Heart left ventricle (tissue), 16 donors: ENCODE measurements at regions of chr9 and their contacts with region 1.

Region 1: GRCh38 chr9:706606-707459 is 134.7 kb upstream of the DMRT1 start:
- DNase-seq: peak; percentile 60 to 84 (median 70)
- ATAC-seq: peak; percentile 23 to 70 (median 66)
- H3K4me3 ChIP-seq: peak overlapping the region; percentile 20 to 68 (median 58)
- H3K27ac ChIP-seq: peak overlapping the region; percentile 42 to 85 (median 64)
- H3K4me1 ChIP-seq: peaks cover 4 to 57% (median 33%) of the 10 kb centered on the region in 12 donors
- H3K27me3 ChIP-seq: peaks cover 0 to 4% (median 0%) of the 10 kb centered on the region in 9 donors
- CTCF ChIP-seq: no peak
- POLR2A ChIP-seq: no peak

Region 2: DNA sequence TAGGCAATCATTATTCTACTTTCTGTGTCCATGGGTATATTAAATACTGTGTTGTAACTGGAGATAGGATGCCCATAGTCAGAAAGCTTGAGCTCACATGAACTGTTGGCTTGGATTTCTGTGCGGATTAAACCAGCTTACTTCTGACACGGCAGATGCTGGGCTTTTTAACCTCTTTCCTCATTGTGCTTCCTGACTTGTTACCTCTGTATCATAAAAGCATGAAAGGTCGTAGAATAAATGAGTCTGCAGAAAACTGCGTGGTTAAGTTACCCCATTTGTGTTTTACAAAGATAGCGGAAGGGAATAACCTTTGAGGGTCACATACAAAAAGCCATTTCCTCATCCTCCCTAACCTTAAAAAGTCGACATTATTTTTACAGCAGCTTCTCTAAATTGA is 64.8 kb before region 1 on chr9:
- intact Hi-C with region 1: no loop called
- DNase-seq: no peak
- ATAC-seq: no peak
- H3K4me3 ChIP-seq: no peak overlapping the region
- H3K27ac ChIP-seq: peak overlapping the region; percentile 31 to 84 (median 62)
- H3K4me1 ChIP-seq: peaks cover 0 to 34% (median 12%) of the 10 kb centered on the region in 12 donors
- H3K27me3 ChIP-seq: no peaks in the 10 kb centered on the region
- CTCF ChIP-seq: no peak
- POLR2A ChIP-seq: no peak

Region 3: GRCh38 chr9:738209-738915 is 31.5 kb after region 1 on chr9:
- intact Hi-C with region 1: loop called in 2 of 10 experiments (anchors 2 to 5 kb)
- DNase-seq: peak; percentile 70 to 81 (median 79)
- ATAC-seq: peak; percentile 75 to 92 (median 87)
- H3K4me3 ChIP-seq: no peak overlapping the region
- H3K27ac ChIP-seq: peak overlapping the region; percentile 69 to 95 (median 88)
- H3K4me1 ChIP-seq: peaks cover 8 to 82% (median 43%) of the 10 kb centered on the region in 12 donors
- H3K27me3 ChIP-seq: no peaks in the 10 kb centered on the region
- CTCF ChIP-seq: no peak
- POLR2A ChIP-seq: peak in 1 of 2 donors; percentile 14

Region 4: DNA sequence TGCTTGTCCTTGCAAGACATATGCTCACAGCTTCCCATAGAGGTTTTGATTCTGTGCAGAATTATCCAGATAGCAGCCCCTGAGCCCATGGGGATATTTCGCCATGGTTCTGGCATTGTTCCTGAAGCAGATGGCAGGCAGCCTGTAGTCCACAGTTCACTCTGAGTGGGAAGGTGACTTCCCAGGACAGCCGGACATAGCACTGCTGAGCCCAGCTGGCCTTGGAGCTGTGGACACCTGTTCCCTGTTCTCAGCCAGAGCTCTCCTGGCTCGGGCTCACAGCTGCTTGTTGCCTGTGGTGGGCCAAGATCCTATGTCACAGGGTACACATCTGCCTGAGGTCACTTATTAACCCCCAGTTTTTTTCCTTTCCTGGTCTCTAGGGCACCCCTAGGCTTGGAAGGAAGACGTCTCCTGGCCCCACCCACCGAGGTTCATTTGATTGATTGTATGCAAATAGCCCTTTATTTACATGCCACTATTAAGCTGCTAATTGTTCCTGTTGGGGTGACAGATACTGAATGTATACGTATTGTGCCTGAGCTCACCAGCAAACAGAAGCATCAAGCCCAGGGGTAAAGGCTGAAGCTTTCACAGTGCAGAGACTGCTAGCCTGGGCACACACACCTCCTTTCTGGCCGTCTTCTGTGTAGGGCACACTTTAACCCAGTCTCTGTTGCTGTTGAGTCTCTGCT is 38.1 kb after region 1 on chr9:
- intact Hi-C with region 1: loop called in 2 of 10 experiments (anchors 2 to 5 kb)
- DNase-seq: peak; percentile 83 to 91 (median 86)
- ATAC-seq: peak; percentile 94 to 97 (median 96)
- H3K4me3 ChIP-seq: no peak overlapping the region
- H3K27ac ChIP-seq: peak overlapping the region; percentile 20 to 81 (median 72)
- H3K4me1 ChIP-seq: peaks cover 0 to 50% (median 25%) of the 10 kb centered on the region in 12 donors
- H3K27me3 ChIP-seq: no peaks in the 10 kb centered on the region
- CTCF ChIP-seq: no peak
- POLR2A ChIP-seq: no peak

Region 5: DNA sequence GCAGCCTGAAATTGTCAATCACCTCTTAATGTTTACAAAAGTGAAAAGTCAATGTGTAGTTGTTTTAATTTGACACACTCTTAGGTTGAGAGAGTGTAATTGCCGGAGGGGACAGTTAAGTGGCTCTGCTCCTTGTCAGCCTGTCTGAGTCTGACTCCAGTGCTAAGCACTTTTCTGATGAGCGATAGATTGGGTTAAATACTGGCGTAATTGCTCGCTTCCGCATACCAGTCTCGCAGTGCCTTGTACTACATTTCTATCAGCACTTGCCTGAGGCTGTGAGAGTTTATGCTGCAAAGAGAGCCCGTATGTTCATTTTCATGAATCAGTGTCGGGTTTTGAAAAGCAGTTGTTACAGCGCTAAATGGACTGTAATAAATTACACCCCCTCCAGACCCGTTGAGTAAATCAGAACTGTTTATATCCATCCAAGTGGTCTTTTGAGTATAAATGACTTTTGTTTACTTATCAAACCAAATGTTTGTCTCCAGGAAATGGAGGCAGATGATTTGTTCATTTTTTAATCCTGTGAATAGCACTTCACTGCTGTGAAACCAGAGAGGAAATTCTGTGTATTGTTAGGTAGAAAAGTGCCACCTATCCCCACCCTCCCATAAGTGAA is 228.6 kb after region 1 on chr9:
- intact Hi-C with region 1: no loop called
- DNase-seq: no peak
- ATAC-seq: no peak
- H3K4me3 ChIP-seq: no peak overlapping the region
- H3K27ac ChIP-seq: no peak overlapping the region
- H3K4me1 ChIP-seq: no peaks in the 10 kb centered on the region
- H3K27me3 ChIP-seq: peaks cover 0 to 50% (median 21%) of the 10 kb centered on the region in 9 donors
- CTCF ChIP-seq: no peak
- POLR2A ChIP-seq: no peak